PC-3 (cell line): ENCODE measurements at regions of chr20 and their contacts with region 1.

Region 1: DNA sequence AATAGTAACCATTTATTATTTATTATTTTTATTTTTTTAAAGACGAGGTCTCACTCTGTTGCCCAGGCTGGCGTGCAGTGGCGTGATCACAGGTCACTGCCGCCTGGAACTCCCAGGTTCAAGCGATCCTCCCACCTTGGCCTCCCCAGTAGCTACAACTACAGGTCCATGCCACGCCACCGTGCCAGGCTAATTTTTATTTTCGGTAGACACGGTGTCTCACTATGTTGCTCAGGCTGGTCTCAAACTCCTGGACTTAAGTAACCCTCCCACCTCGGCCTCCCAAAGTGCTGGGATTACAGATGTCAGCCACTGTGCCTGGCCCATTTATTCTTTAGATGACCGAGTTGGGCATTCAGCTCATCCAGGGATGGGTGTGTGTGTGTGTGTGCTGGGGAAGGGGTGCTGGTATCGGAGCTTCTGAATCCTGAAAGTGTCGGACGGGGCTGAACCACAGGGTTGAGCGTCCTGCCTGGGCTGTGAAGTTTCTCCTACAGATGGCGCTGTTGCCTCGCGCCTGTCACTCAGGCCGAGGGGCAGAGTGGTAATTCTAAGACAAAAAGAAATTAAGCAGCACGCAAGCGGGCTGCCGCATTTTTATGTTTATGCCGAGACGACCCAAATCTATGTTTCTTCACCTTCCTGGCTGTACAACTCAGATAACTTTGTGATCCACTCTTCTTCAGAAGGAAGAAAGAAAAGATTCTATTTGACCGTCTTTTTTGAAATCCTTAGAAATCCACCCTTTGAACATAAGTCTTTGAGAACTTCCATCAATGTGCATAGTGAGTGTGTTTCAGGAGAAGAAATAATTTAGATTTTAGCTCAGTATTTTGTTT is 252.8 kb downstream of the CDH26 start:
- DNase-seq: peak; percentile 68
- ATAC-seq: peak; percentile 93
- H3K4me3 ChIP-seq: no peak overlapping the region
- H3K27ac ChIP-seq: no peak overlapping the region
- H3K4me1 ChIP-seq: no peaks in the 10 kb centered on the region
- H3K27me3 ChIP-seq: peaks cover 55% of the 10 kb centered on the region
- CTCF ChIP-seq: peak; percentile 90

Region 2: GRCh38 chr20:60262967-60263603 is 52.1 kb after region 1 on chr20:
- CTCF ChIA-PET with region 1: no interaction called
- POLR2A ChIA-PET with region 1: no interaction called
- intact Hi-C with region 1: no loop called
- DNase-seq: peak; percentile 38
- ATAC-seq: no peak
- H3K4me3 ChIP-seq: no peak overlapping the region
- H3K27ac ChIP-seq: no peak overlapping the region
- H3K4me1 ChIP-seq: no peaks in the 10 kb centered on the region
- H3K27me3 ChIP-seq: no peaks in the 10 kb centered on the region; the same call in 1 of the 2 replicates
- CTCF ChIP-seq: peak; percentile 62

Region 3: DNA sequence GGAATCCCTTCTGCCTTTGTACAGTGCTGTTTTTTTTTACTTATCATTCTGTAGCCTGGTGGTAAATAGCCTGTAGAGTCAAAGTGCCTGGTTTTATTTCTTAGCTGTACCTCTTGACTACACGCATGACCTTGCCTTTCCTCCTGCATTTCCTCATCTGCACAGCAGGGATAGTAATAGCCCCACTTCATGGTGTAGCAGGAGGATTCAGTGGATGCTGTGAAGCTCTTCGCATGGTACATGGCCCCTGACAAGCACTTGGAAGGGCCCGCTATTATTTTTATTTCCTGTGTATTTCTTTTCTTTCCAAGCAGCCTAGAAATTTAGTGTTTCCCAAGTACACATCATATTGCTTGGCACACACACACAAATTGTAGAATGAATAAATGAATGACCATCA is 294.4 kb after region 1 on chr20:
- CTCF ChIA-PET with region 1: no interaction called
- POLR2A ChIA-PET with region 1: no interaction called
- intact Hi-C with region 1: no loop called
- DNase-seq: no peak
- ATAC-seq: no peak
- H3K4me3 ChIP-seq: no peak overlapping the region
- H3K27ac ChIP-seq: no peak overlapping the region
- H3K4me1 ChIP-seq: no peaks in the 10 kb centered on the region
- H3K27me3 ChIP-seq: no peaks in the 10 kb centered on the region
- CTCF ChIP-seq: no peak

Region 4: GRCh38 chr20:61896058-61896961 is 1685.3 kb after region 1 on chr20:
- CTCF ChIA-PET with region 1: no interaction called
- POLR2A ChIA-PET with region 1: no interaction called
- intact Hi-C with region 1: loop called (anchors 5 kb)
- DNase-seq: peak; percentile 69
- ATAC-seq: peak; percentile 91
- H3K4me3 ChIP-seq: no peak overlapping the region
- H3K27ac ChIP-seq: no peak overlapping the region
- H3K4me1 ChIP-seq: no peaks in the 10 kb centered on the region
- H3K27me3 ChIP-seq: peaks cover 67% of the 10 kb centered on the region
- CTCF ChIP-seq: peak; percentile 81